Colonic mucosa (tissue), 4 donors: ENCODE measurements at regions of chr2 and their contacts with region 1.

Region 1: DNA sequence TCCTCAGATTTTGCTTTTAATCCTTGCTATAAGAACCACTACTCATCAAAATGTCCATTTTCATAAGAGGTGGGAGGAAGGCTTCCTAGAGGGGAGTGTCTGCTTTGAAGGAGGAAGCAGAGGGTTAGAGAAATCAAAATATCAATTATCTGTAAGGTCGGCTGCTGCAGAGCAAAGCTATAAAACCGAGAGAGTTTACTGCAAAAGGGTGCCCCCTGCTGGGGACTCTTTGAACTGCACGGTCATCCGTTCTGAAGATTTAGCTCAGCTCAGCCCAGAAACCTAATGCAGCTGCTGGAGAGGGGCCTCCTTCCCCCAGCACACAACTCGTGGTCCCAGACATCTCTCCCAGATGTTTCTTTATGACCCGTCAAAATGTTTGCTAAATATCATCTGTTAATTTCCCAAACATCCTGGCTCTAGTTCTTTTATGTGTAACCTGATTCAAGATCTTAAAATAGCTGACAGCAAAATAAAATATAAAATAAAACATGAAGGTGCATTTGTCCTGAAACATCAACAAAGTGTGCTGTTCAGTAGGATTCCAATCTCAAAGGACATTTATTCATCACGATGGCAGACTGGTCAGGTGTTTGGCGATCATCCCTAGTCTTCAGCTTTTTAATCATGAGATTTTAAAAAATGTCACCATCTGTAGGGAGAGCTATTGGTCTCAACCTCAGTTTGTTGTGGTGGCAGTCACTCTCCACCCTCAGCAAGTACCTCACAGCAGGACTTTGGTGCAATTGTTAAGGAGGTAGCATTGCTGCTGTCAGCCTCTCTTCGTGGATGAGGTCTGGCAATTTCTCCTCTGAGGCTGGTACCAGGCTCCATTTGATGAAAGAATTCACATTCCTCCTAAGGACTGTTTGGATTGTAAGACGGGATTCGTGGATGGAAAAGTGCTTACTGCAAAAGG is 185.9 kb downstream of the MTX2 start:
- DNase-seq: peak; percentile 90
- H3K4me3 ChIP-seq: no peak overlapping the region
- H3K27ac ChIP-seq: peak overlapping the region; percentile 13
- H3K4me1 ChIP-seq: no peaks in the 10 kb centered on the region
- H3K27me3 ChIP-seq: no peaks in the 10 kb centered on the region
- CTCF ChIP-seq: peak; percentile 94

Region 2: GRCh38 chr2:176140513-176141317 is 314.4 kb before region 1 on chr2:
- intact Hi-C with region 1: loop called (anchors 1 kb)
- DNase-seq: peak; percentile 80
- H3K4me3 ChIP-seq: peak overlapping the region; percentile 47
- H3K27ac ChIP-seq: peak overlapping the region; percentile 56
- H3K4me1 ChIP-seq: no peaks in the 10 kb centered on the region
- H3K27me3 ChIP-seq: peaks cover 4% of the 10 kb centered on the region
- CTCF ChIP-seq: peak; percentile 93

Region 3: DNA sequence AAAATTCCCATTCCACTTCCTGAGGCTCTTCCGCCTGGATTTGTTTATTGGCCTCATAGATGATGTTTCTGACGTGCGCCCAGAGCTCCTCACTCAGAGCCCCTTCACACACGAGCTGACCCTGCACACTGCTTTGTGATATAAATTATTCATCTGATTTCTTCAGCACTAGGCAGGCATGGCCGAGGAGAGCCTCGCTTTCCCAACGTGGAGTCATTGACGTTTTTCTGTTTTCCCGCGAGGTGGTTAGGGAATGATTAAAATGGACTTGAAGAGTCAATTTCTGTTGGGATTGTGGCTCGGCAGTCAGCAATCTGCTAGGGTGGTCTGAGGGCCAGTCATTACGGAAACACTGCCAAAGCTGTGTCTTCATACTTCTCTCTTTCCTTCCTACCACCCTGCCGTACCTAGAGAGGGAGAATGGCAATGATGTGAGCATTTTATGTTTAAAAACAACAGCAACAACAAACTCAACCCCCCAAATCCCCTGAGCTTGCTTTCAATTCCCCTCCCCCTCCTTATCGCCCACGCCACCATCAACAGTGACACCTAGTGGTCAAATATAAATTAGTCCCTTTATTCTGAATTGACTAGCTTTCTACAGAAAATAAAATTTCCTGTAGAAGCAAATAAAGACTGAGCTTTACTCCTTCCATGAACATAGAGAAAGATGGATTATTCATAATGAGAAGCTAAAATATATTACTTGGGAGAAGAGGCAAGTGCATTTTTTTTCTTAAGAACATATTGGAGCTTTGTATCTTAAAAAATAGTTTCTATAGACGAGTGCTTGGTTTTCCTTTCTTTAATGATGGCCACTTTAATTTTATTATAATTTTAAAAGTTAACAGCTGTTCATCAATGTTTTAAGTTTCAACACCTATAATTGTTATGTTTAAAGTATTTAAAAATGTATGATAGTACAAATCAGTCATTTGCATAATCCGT is 99.2 kb after region 1 on chr2:
- intact Hi-C with region 1: loop called (anchors 5 kb)
- DNase-seq: peak; percentile 37
- H3K4me3 ChIP-seq: peak overlapping the region; percentile 21
- H3K27ac ChIP-seq: peak overlapping the region; percentile 35
- H3K4me1 ChIP-seq: no peaks in the 10 kb centered on the region
- H3K27me3 ChIP-seq: no peaks in the 10 kb centered on the region
- CTCF ChIP-seq: peak; percentile 72

Region 4: DNA sequence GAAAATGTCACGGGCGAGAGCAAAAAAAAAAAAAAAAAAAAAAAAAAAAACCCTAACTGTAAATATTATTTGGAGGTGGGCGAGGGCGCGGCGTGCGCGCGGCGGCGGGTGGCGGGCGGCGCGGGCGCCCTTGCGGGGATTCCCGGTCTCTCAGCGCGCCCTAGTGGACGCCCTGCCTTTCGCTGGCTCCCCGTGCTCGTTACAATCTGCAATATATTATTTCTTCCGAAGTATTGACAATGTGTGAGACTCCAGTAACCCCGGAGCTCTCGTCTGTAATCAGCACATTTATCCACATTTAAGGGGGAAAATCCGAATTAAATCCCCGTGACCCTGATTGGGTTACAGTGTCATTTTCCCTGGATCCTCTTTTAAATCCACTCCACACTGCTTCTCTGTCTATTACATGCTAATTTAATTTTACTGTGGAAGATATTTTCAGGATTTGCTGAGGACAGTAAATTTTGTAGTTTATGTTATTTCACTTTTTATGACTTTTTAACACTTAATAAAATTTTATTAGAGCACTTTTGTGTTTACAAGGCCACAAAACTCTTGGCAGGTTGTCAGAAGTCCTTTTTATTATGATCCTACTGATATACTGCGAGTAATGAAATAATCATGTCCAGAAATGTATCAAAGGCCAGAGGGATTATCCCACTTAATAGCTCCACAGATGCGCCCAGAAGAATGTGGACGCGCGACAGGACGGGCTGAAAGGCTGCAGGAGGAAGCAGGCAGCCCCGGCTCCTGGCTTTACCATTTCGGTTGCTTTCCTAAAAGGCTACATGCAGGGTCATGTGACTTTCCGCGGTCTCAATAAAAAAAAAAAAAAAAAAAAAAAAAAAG is 183.2 kb after region 1 on chr2:
- intact Hi-C with region 1: loop called (anchors 5 kb)
- DNase-seq: peak; percentile 71
- H3K4me3 ChIP-seq: peak overlapping the region; percentile 64
- H3K27ac ChIP-seq: peak overlapping the region; percentile 75
- H3K4me1 ChIP-seq: no peaks in the 10 kb centered on the region
- H3K27me3 ChIP-seq: peaks cover 9% of the 10 kb centered on the region
- CTCF ChIP-seq: peak; percentile 81